Posterior vena cava (tissue), 2 donors: ENCODE measurements at regions of chr10 and their contacts with region 1.

Region 1: GRCh38 chr10:71963756-71964668 is at the start of gene CHST3:
- DNase-seq: peak; percentile 91
- total RNA-seq, gene CHST3: 34.9 to 37.7 TPM

Region 2: GRCh38 chr10:71999360-72000072 is 35.5 kb after region 1 on chr10:
- intact Hi-C with region 1: loop called in 1 of 2 experiments (anchors 5 kb)
- DNase-seq: peak; percentile 91

Region 3: GRCh38 chr10:72740528-72740927 is 776.5 kb after region 1 on chr10:
- intact Hi-C with region 1: loop called in 1 of 2 experiments (anchors 10 kb)
- DNase-seq: no peak